CD4-positive, alpha-beta T cell (primary cell): ENCODE measurements at regions of chr1 and their contacts with region 1.

Region 1: GRCh38 chr1:167270349-167271092 is 49.8 kb downstream of the POU2F1 start:
- DNase-seq: no peak
- ATAC-seq: no peak
- H3K4me3 ChIP-seq: no peak overlapping the region
- H3K4me3 Mint-ChIP-seq: no peak overlapping the region
- H3K27ac ChIP-seq: no peak overlapping the region
- H3K27ac Mint-ChIP-seq: no peak overlapping the region
- H3K4me1 ChIP-seq: peaks cover 5% of the 10 kb centered on the region
- H3K4me1 Mint-ChIP-seq: peaks cover 53% of the 10 kb centered on the region
- H3K27me3 ChIP-seq: no peaks in the 10 kb centered on the region
- H3K27me3 Mint-ChIP-seq: no peaks in the 10 kb centered on the region
- CTCF ChIP-seq: no peak

Region 2: DNA sequence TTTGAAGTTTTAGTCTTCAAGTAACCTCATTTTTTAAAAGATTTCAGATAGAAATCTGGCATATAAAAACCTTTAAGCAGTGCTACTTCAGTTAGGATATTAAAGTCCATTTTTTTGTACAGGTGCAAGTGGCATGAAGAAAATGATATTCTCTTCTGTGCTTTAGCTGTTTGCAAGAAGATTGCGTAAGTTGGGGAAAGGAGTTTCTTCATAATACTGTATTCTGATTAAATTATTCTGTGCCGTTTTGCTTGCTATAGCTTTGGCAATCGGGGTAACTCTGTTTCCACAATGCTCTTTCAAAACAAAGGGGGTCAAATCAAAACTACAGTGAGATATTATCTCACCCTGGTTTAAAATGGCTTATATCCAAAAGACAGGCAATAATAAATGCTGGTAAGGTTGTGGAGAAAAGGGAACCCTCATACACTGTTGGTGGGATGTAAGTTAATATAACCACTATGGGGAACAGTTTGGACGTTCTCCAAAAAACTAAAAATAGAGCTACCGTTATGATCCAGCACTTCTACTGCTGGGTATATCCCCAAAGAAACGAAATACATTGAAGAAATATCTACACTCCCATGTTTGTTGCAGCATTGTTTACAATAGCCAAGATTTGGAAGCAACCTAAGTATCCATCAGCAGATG is 254.3 kb before region 1 on chr1:
- CTCF ChIA-PET with region 1: no interaction called
- POLR2A ChIA-PET with region 1: no interaction called
- intact Hi-C with region 1: no loop called
- DNase-seq: no peak
- ATAC-seq: no peak
- H3K4me3 ChIP-seq: no peak overlapping the region
- H3K4me3 Mint-ChIP-seq: no peak overlapping the region
- H3K27ac ChIP-seq: no peak overlapping the region
- H3K27ac Mint-ChIP-seq: no peak overlapping the region
- H3K4me1 ChIP-seq: no peaks in the 10 kb centered on the region
- H3K4me1 Mint-ChIP-seq: no peaks in the 10 kb centered on the region
- H3K27me3 ChIP-seq: peaks cover 0 to 3% of the 10 kb centered on the region in 2 experiments
- H3K27me3 Mint-ChIP-seq: peaks cover 18% of the 10 kb centered on the region
- CTCF ChIP-seq: no peak

Region 3: GRCh38 chr1:167288390-167289074 is 18.0 kb after region 1 on chr1:
- CTCF ChIA-PET with region 1: interaction called, 10 read pairs
- POLR2A ChIA-PET with region 1: no interaction called
- intact Hi-C with region 1: no loop called
- DNase-seq: no peak
- ATAC-seq: no peak
- H3K4me3 ChIP-seq: no peak overlapping the region
- H3K4me3 Mint-ChIP-seq: no peak overlapping the region
- H3K27ac ChIP-seq: no peak overlapping the region
- H3K27ac Mint-ChIP-seq: no peak overlapping the region
- H3K4me1 ChIP-seq: no peaks in the 10 kb centered on the region
- H3K4me1 Mint-ChIP-seq: peaks cover 48% of the 10 kb centered on the region
- H3K27me3 ChIP-seq: no peaks in the 10 kb centered on the region
- H3K27me3 Mint-ChIP-seq: no peaks in the 10 kb centered on the region
- CTCF ChIP-seq: no peak

Region 4: DNA sequence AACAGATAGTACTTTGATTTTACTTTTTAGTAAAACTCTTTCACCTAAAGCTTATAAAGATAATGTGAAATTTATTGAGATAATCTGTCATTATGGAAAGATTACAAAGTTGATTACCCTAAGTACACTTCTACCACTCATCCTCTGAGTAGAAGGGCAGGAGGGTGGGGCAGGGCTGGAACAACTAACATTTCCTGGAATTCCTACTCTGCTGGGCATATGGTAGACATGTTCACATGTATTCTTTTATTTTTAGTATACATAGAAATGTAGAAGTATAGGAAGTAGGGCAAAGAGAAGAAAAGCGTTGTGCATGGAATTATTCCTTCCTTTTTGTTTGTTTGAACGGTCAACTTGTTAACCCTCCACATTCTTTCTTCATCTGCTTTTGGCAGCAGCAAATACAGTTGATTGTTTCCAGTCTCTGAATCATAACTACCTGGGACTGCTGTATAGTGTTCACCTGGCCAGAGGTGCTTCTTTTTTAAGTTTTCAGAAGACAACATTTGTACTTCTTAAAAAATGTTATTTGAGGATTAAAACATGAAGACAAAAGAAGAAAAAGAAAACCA is 35.3 kb after region 1 on chr1:
- CTCF ChIA-PET with region 1: no interaction called
- POLR2A ChIA-PET with region 1: no interaction called
- intact Hi-C with region 1: no loop called
- DNase-seq: no peak
- ATAC-seq: no peak
- H3K4me3 ChIP-seq: no peak overlapping the region
- H3K4me3 Mint-ChIP-seq: no peak overlapping the region
- H3K27ac ChIP-seq: no peak overlapping the region
- H3K27ac Mint-ChIP-seq: no peak overlapping the region
- H3K4me1 ChIP-seq: no peaks in the 10 kb centered on the region
- H3K4me1 Mint-ChIP-seq: peaks cover 30% of the 10 kb centered on the region
- H3K27me3 ChIP-seq: no peaks in the 10 kb centered on the region
- H3K27me3 Mint-ChIP-seq: no peaks in the 10 kb centered on the region
- CTCF ChIP-seq: no peak

Region 5: GRCh38 chr1:167409183-167409582 is 138.7 kb after region 1 on chr1:
- CTCF ChIA-PET with region 1: interaction called, 12 read pairs
- POLR2A ChIA-PET with region 1: no interaction called
- intact Hi-C with region 1: loop called in 1 of 2 experiments (anchors 10 kb)
- DNase-seq: peak in 1 of 14 experiments; percentile 37
- ATAC-seq: peak; percentile 54
- H3K4me3 ChIP-seq: no peak overlapping the region
- H3K4me3 Mint-ChIP-seq: no peak overlapping the region
- H3K27ac ChIP-seq: no peak overlapping the region
- H3K27ac Mint-ChIP-seq: no peak overlapping the region
- H3K4me1 ChIP-seq: no peaks in the 10 kb centered on the region
- H3K4me1 Mint-ChIP-seq: no peaks in the 10 kb centered on the region
- H3K27me3 ChIP-seq: no peaks in the 10 kb centered on the region
- H3K27me3 Mint-ChIP-seq: no peaks in the 10 kb centered on the region
- CTCF ChIP-seq: no peak

Region 6: DNA sequence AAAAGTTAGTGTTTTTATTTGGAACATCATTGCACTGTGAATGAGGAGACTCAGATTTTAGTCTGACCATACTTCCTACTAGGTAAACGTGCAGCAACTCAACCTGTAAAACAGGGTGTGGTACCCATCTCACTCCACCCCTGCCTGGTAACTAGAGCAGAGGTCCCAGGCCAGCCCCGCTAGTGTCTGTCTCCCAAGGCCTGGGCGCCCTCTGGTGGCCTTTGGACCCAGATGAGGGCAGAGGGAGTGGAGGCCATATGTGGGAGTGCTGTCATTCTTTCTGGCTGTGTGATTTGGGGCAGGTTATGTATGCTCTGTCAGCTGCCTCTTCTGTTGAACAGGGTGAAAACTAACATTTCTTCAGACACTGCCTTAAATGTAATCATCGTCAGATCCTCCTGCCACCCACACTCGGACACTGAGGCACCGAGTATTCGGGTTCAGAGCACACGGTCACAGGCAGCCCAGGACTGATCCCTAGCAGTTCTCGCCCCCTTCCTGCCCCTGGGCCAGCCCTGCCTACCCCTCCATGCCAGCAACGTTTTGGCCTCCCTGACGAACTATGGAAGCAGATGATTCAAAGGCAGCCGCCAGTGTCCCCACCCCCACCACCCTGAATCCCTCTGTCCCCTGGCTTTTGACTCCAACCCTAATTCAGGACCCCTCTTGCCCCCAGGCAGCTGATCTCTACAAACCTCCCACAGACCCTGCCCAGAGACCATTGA is 171.8 kb after region 1 on chr1:
- CTCF ChIA-PET with region 1: interaction called, 8 read pairs
- POLR2A ChIA-PET with region 1: no interaction called
- intact Hi-C with region 1: loop called (anchors 1 to 2 kb)
- DNase-seq: peak; percentile 79 to 92 (median 88)
- ATAC-seq: peak; percentile 84
- H3K4me3 ChIP-seq: no peak overlapping the region
- H3K4me3 Mint-ChIP-seq: peak overlapping the region; percentile 45
- H3K27ac ChIP-seq: peak overlapping the region in 1 of 2 donors; percentile 41
- H3K27ac Mint-ChIP-seq: peak overlapping the region; percentile 100
- H3K4me1 ChIP-seq: peaks cover 91% of the 10 kb centered on the region
- H3K4me1 Mint-ChIP-seq: peaks cover 89% of the 10 kb centered on the region
- H3K27me3 ChIP-seq: no peaks in the 10 kb centered on the region
- H3K27me3 Mint-ChIP-seq: no peaks in the 10 kb centered on the region
- CTCF ChIP-seq: peak; percentile 86

Region 7: GRCh38 chr1:167533851-167534300 is 263.4 kb after region 1 on chr1:
- CTCF ChIA-PET with region 1: interaction called, 17 read pairs
- POLR2A ChIA-PET with region 1: interaction called, 3 read pairs
- intact Hi-C with region 1: loop called in 1 of 2 experiments (anchors 2 kb)
- DNase-seq: peak in 13 of 14 experiments; percentile 44 to 82 (median 57)
- ATAC-seq: peak; percentile 90
- H3K4me3 ChIP-seq: no peak overlapping the region
- H3K4me3 Mint-ChIP-seq: no peak overlapping the region
- H3K27ac ChIP-seq: no peak overlapping the region
- H3K27ac Mint-ChIP-seq: no peak overlapping the region
- H3K4me1 ChIP-seq: peaks cover 7% of the 10 kb centered on the region
- H3K4me1 Mint-ChIP-seq: no peaks in the 10 kb centered on the region
- H3K27me3 ChIP-seq: no peaks in the 10 kb centered on the region
- H3K27me3 Mint-ChIP-seq: no peaks in the 10 kb centered on the region
- CTCF ChIP-seq: peak; percentile 97

Region 8: GRCh38 chr1:167542109-167543032 is 271.9 kb after region 1 on chr1:
- CTCF ChIA-PET with region 1: interaction called, 13 read pairs
- POLR2A ChIA-PET with region 1: interaction called, 4 read pairs
- intact Hi-C with region 1: loop called in 1 of 2 experiments (anchors 2 kb)
- DNase-seq: no peak
- ATAC-seq: no peak
- H3K4me3 ChIP-seq: no peak overlapping the region
- H3K4me3 Mint-ChIP-seq: no peak overlapping the region
- H3K27ac ChIP-seq: no peak overlapping the region
- H3K27ac Mint-ChIP-seq: no peak overlapping the region
- H3K4me1 ChIP-seq: no peaks in the 10 kb centered on the region
- H3K4me1 Mint-ChIP-seq: peaks cover 19% of the 10 kb centered on the region
- H3K27me3 ChIP-seq: no peaks in the 10 kb centered on the region
- H3K27me3 Mint-ChIP-seq: no peaks in the 10 kb centered on the region
- CTCF ChIP-seq: no peak

Region 9: DNA sequence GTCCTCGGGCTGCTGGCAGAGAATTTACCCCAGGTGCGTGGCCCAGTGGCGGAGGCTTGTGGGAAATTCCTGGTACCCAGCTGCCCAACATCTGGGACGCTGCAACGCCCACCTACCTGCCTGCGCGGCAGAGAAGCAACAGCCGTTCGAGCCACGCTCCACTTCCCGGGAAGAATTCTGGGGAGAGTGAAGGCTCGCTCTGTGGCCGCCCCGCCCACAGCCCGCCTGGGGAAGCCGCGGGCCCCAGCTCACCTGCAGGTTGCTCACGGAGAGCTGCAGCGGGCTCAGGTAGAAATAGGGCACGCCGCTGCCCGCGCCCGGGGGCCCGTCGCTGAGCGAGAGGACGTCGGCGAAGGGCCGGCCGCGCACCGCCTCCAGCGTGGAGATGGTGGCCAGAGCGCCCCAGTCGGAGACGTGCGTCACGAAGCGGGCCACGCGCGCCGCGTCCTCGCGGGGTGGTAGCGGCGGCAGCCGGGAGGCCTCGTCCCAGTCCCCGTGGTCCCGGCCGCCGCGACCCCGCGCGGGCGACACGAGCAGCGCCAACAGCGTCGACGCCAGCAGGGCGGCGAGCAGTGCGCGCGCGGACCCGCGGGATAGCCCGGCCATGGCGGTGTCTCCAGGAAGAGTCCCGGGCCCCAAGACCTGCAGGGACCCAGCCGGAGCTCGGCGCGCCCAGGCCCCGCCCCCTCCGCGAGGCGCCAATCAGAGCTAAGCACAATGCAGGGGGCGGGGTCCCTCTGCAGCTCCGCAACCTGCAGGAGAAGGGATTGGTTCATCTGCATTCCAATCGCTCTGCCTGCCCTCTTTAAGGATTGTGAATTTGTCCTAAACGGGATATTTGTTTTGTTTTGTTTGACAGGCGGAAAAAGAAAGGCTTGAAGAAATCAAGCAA is 282.9 kb after region 1 on chr1 and contains the start of gene CREG1:
- CTCF ChIA-PET with region 1: interaction called, 17 read pairs
- POLR2A ChIA-PET with region 1: interaction called, 7 read pairs
- intact Hi-C with region 1: loop called in 1 of 2 experiments (anchors 5 kb)
- DNase-seq: peak; percentile 76 to 95 (median 86)
- ATAC-seq: peak; percentile 97
- H3K4me3 ChIP-seq: peak within 1 kb of the TSS; percentile 75
- H3K4me3 Mint-ChIP-seq: peak within 1 kb of the TSS; percentile 96
- H3K27ac ChIP-seq: peak within 1 kb of the TSS in 1 of 2 donors; percentile 25
- H3K27ac Mint-ChIP-seq: peak within 1 kb of the TSS; percentile 81
- H3K4me1 ChIP-seq: peaks cover 25% of the 10 kb centered on the region
- H3K4me1 Mint-ChIP-seq: peaks cover 42% of the 10 kb centered on the region
- H3K27me3 ChIP-seq: no peaks in the 10 kb centered on the region
- H3K27me3 Mint-ChIP-seq: no peaks in the 10 kb centered on the region
- CTCF ChIP-seq: no peak
- total RNA-seq, gene CREG1: 10.7 to 11.2 TPM